Ovary (tissue), 10 donors: ENCODE measurements at regions of chr17 and their contacts with region 1.

Region 1: GRCh38 chr17:43753493-43754129 is 5.0 kb downstream of the SOST start:
- DNase-seq: no peak
- H3K4me3 ChIP-seq: no peak overlapping the region
- H3K27ac ChIP-seq: no peak overlapping the region
- H3K4me1 ChIP-seq: peaks cover 4% of the 10 kb centered on the region
- H3K27me3 ChIP-seq: no peaks in the 10 kb centered on the region
- CTCF ChIP-seq: no peak
- EP300 ChIP-seq: no peak
- POLR2A ChIP-seq: no peak

Region 2: GRCh38 chr17:43713494-43714162 is 40.0 kb before region 1 on chr17:
- intact Hi-C with region 1: loop called in 2 of 4 experiments (anchors 5 kb)
- DNase-seq: no peak
- H3K4me3 ChIP-seq: peak overlapping the region; percentile 29
- H3K27ac ChIP-seq: no peak overlapping the region
- H3K4me1 ChIP-seq: peaks cover 2% of the 10 kb centered on the region
- H3K27me3 ChIP-seq: no peaks in the 10 kb centered on the region
- CTCF ChIP-seq: no peak
- EP300 ChIP-seq: no peak
- POLR2A ChIP-seq: no peak